AG04449 (cell line): ENCODE measurements at regions of chr2 and their contacts with region 1.

Region 1: DNA sequence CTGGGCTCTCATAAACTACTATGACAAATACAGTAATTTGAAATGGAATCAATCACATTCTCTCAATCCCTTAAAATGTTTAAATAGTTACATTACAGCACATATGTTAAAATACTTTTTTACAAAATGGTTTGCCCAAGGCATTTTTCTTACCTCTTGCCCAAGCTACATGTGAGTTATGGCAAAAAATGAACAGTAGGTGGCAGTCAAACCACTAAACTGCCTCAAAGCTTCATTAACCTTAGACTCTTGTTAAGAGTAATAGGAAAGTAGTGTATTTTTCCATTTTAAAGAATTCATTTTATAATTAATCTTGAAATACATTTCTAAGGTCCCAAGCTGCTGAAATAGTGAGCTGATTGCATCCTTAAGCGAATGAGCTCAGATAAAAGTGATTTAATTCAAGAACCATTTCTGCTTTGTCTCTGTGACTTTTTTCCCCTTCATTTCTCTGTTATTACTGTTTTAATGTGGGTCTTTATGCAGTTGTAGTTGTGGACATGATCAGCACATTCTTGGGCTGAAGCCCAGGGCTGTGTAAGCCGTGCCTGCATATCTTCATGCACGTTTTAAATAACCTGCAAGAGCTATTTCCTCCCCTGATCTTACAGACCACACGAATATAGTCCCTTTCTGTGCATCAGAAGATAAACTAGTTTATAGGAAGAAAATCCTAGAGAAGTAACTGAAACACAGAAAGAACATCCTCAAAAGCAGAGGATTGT is 311.8 kb downstream of the LNPK start:
- DNase-seq: peak; percentile 24
- H3K4me3 ChIP-seq: no peak overlapping the region
- CTCF ChIP-seq: peak; percentile 35

Region 2: DNA sequence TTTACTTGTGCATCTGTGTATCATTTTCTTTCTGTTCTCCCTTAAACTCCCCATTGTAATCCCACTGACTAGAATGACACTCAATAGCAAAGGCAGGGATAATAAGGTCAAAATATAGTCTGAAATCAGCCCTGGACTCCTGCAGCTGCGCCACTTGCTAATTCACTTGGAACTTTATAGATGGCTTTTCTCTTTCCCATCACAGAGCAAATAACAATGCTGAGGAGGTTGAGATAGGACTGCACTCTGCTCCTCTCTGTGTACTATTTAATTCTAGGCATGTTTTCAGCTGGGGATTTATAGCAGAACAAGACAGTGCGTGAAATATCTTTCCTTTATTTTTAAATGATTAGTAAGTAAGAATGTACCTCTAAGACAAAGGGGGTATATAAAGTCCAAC is 12.4 kb before region 1 on chr2:
- CTCF ChIA-PET with region 1: interaction called, 11 read pairs
- POLR2A ChIA-PET with region 1: no interaction called
- DNase-seq: no peak
- H3K4me3 ChIP-seq: no peak overlapping the region
- CTCF ChIP-seq: no peak

Region 3: DNA sequence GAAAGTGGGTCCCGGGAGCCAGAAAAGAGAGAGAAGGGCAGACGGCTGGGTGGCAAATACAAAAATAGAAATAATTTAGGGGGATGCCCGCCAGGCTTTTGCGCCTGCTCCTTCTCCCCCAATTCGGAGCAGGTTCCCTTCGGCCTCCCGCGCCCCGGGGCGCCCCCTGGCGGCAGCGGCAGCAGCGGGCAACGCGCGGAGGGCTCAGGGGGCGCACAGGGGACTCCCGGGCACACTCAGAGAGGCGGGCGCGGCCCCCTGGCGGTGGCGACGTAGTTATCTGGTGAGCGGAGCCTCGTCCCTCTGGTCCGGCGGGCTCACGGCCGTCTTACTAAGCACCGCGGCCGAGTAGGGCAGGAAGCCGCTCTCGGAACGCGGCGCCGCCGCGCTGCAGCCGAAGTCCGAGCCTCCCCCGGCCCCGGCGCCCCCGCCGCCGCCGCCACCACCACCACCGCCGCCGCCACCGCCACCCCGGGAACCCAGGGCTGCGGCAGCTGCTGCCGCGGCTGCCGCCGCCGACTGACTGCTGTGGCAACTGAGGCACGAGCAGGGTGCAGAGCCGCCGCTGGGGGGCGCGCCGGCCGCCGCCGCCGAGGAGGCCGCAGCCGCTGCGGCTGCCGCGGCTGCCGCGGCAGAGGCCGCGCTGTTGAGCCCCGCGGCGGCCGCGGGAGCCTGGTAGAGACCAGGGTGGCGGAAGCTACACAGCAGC is 389.7 kb after region 1 on chr2:
- CTCF ChIA-PET with region 1: interaction called, 115 read pairs
- POLR2A ChIA-PET with region 1: no interaction called
- DNase-seq: no peak
- H3K4me3 ChIP-seq: no peak overlapping the region
- CTCF ChIP-seq: peak; percentile 72